B cell (primary cell): ENCODE measurements at regions of chr6 and their contacts with region 1.

Region 1: DNA sequence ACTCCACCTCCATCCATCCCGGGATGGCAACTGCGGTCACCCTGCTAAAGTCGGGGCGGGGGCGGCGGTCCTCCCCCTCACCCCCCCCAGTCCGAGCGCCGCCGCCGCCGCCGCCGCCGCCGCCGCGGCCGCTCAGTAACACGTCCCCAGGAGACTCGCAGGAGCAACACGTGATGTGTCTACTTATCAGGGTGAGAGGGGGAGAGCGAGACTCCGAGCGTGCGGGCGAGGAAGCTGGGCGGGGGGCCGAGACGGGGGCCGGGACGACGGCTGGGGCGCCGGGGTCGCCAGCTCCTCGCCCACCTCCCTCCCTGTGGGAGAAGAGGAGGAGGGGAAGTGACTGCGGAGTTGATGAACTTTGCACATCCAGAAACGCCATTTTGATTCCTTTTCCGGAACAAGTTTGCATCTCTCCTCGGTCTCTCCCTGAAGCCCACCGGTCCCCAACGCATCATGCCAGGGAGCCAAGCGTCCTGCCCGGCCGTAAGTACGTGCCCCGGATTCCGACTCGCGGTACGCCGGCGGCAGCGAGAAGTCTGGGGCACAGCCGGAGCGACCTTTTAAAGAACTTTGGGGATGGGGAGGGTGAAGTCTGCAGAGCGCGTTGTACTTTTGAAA is at the start of gene RREB1:
- DNase-seq: peak; percentile 81
- ATAC-seq: peak; percentile 56
- H3K4me3 ChIP-seq: peak within 1 kb of the TSS; percentile 26 to 98 (median 94)
- H3K4me3 Mint-ChIP-seq: peak within 1 kb of the TSS; percentile 99
- H3K27ac ChIP-seq: peak within 1 kb of the TSS; percentile 73 to 88
- H3K27ac Mint-ChIP-seq: peak within 1 kb of the TSS; percentile 96
- H3K4me1 ChIP-seq: peaks cover 23 to 29% of the 10 kb centered on the region in 2 donors
- H3K4me1 Mint-ChIP-seq: peaks cover 37% of the 10 kb centered on the region
- H3K27me3 ChIP-seq: no peaks in the 10 kb centered on the region
- H3K27me3 Mint-ChIP-seq: no peaks in the 10 kb centered on the region
- CTCF ChIP-seq: no peak
- total RNA-seq, gene RREB1: 58.6 and 62.5 TPM in 2 replicates

Region 2: GRCh38 chr6:6505111-6505510 is 602.6 kb before region 1 on chr6:
- CTCF ChIA-PET with region 1: no interaction called
- POLR2A ChIA-PET with region 1: no interaction called
- intact Hi-C with region 1: no loop called
- DNase-seq: no peak
- ATAC-seq: no peak
- H3K4me3 ChIP-seq: no peak overlapping the region
- H3K4me3 Mint-ChIP-seq: no peak overlapping the region
- H3K27ac ChIP-seq: no peak overlapping the region
- H3K27ac Mint-ChIP-seq: no peak overlapping the region
- H3K4me1 ChIP-seq: peaks cover 0 to 6% of the 10 kb centered on the region in 2 donors
- H3K4me1 Mint-ChIP-seq: peaks cover 4% of the 10 kb centered on the region
- H3K27me3 ChIP-seq: no peaks in the 10 kb centered on the region
- H3K27me3 Mint-ChIP-seq: peaks cover 3% of the 10 kb centered on the region
- CTCF ChIP-seq: no peak

Region 3: GRCh38 chr6:7051233-7052114 is 56.2 kb before region 1 on chr6:
- CTCF ChIA-PET with region 1: no interaction called
- POLR2A ChIA-PET with region 1: no interaction called
- intact Hi-C with region 1: loop called (anchors 2 kb)
- DNase-seq: peak; percentile 74
- ATAC-seq: peak; percentile 78
- H3K4me3 ChIP-seq: peak overlapping the region; percentile 16 to 69 (median 58)
- H3K4me3 Mint-ChIP-seq: peak overlapping the region; percentile 86
- H3K27ac ChIP-seq: peak overlapping the region in 1 of 2 donors; percentile 23
- H3K27ac Mint-ChIP-seq: peak overlapping the region; percentile 71
- H3K4me1 ChIP-seq: peaks cover 14 to 16% of the 10 kb centered on the region in 2 donors
- H3K4me1 Mint-ChIP-seq: peaks cover 14% of the 10 kb centered on the region
- H3K27me3 ChIP-seq: no peaks in the 10 kb centered on the region
- H3K27me3 Mint-ChIP-seq: no peaks in the 10 kb centered on the region
- CTCF ChIP-seq: no peak

Region 4: DNA sequence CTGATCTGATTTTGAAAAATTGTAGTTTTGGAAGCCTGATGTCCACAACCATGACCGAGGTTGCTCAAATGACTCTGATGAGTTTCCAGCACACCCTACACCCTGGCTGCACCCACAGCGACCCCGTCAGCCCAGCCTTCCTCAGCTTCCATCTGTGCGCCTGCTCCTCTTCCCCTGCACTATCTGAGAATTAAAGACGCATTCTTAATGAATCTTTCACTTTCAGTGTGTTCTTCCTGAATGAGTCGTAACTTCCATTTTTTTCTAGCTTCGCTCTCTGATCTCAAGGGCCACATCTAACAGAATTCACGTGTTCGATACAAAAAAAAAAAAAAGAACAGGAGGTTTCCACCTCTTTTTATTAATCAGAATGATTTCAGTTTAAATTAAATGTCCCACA is 21.2 kb before region 1 on chr6:
- CTCF ChIA-PET with region 1: interaction called, 5 read pairs
- POLR2A ChIA-PET with region 1: interaction called, 7 read pairs
- intact Hi-C with region 1: loop called (anchors 2 kb)
- DNase-seq: peak; percentile 74
- ATAC-seq: peak; percentile 79
- H3K4me3 ChIP-seq: peak overlapping the region; percentile 30 to 89 (median 47)
- H3K4me3 Mint-ChIP-seq: peak overlapping the region; percentile 86
- H3K27ac ChIP-seq: peak overlapping the region; percentile 50 to 73
- H3K27ac Mint-ChIP-seq: peak overlapping the region; percentile 88
- H3K4me1 ChIP-seq: peaks cover 23 to 24% of the 10 kb centered on the region in 2 donors
- H3K4me1 Mint-ChIP-seq: peaks cover 27% of the 10 kb centered on the region
- H3K27me3 ChIP-seq: no peaks in the 10 kb centered on the region
- H3K27me3 Mint-ChIP-seq: no peaks in the 10 kb centered on the region
- CTCF ChIP-seq: no peak

Region 5: DNA sequence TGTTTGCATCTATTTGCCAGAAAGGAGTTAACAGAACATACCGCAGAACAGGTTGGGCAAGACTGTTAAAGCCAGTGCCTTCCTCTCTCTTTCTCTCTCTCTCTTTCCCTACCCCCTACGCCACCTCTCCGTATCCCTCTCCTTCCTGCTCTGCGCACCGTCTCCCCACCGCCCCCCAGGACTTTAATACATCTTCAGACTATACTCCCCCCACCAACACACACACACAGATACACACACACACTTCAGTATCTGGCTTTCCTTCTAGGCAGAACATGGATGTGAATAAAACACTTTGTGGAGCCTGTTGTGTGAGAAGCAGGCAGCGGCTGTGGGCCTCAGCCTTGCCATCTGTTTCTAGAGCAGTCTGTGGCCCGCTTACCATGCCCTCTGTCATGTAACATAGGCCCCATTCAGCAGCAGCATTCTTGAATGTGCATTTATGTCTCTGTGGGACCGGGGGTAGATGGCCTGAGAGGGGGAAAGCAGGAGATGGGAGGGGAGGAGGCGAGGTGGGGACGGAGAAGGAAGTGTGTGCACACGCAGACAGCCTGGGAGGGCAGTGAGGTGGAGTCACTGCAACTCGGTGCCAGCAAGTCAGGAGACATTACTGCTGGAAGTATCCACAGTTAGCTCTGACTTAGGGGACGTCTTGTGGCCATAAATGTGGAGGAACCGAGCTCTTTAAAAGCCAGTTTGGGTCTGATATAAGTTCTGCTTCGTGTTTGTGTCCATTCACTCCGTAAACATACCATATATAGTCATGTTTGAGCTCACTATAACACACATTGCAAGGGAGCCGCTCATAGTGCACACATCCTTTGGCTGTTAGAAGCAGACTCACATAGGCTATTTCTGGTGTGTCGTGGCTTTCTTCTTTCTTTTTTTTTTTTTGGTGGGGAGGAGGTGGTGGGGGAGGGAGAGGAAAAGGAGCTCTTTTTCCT is 38.5 kb after region 1 on chr6:
- CTCF ChIA-PET with region 1: interaction called, 3 read pairs
- POLR2A ChIA-PET with region 1: interaction called, 11 read pairs
- intact Hi-C with region 1: no loop called
- DNase-seq: peak; percentile 50
- ATAC-seq: peak; percentile 59
- H3K4me3 ChIP-seq: peak overlapping the region in 4 of 5 experiments; percentile 3 to 32 (median 20)
- H3K4me3 Mint-ChIP-seq: peak overlapping the region; percentile 78
- H3K27ac ChIP-seq: peak overlapping the region in 1 of 2 donors; percentile 26
- H3K27ac Mint-ChIP-seq: peak overlapping the region; percentile 69
- H3K4me1 ChIP-seq: peaks cover 33 to 44% of the 10 kb centered on the region in 2 donors
- H3K4me1 Mint-ChIP-seq: peaks cover 72% of the 10 kb centered on the region
- H3K27me3 ChIP-seq: no peaks in the 10 kb centered on the region
- H3K27me3 Mint-ChIP-seq: no peaks in the 10 kb centered on the region
- CTCF ChIP-seq: no peak

Region 6: GRCh38 chr6:7201688-7202541 is 94.2 kb after region 1 on chr6:
- CTCF ChIA-PET with region 1: no interaction called
- POLR2A ChIA-PET with region 1: interaction called, 5 read pairs
- intact Hi-C with region 1: loop called (anchors 1 kb)
- DNase-seq: peak; percentile 87
- ATAC-seq: peak; percentile 97
- H3K4me3 ChIP-seq: peak overlapping the region in 3 of 5 experiments; percentile 3 to 9 (median 7)
- H3K4me3 Mint-ChIP-seq: peak overlapping the region; percentile 62
- H3K27ac ChIP-seq: peak overlapping the region; percentile 48 to 69
- H3K27ac Mint-ChIP-seq: peak overlapping the region; percentile 88
- H3K4me1 ChIP-seq: peaks cover 40 to 46% of the 10 kb centered on the region in 2 donors
- H3K4me1 Mint-ChIP-seq: peaks cover 52% of the 10 kb centered on the region
- H3K27me3 ChIP-seq: no peaks in the 10 kb centered on the region
- H3K27me3 Mint-ChIP-seq: no peaks in the 10 kb centered on the region
- CTCF ChIP-seq: no peak